Upper lobe of right lung (tissue), 1 donor: ENCODE measurements at regions of chr2 and their contacts with region 1.

Region 1: GRCh38 chr2:32969444-32970162 is 22.9 kb downstream of the LTBP1 start:
- DNase-seq: no peak
- ATAC-seq: no peak
- H3K4me3 ChIP-seq: no peak overlapping the region
- H3K27ac ChIP-seq: no peak overlapping the region
- H3K4me1 ChIP-seq: no peaks in the 10 kb centered on the region
- H3K27me3 ChIP-seq: no peaks in the 10 kb centered on the region
- CTCF ChIP-seq: no peak

Region 2: GRCh38 chr2:32715391-32715841 is 254.2 kb before region 1 on chr2:
- intact Hi-C with region 1: no loop called
- DNase-seq: no peak
- ATAC-seq: no peak
- H3K4me3 ChIP-seq: no peak overlapping the region
- H3K27ac ChIP-seq: no peak overlapping the region
- H3K4me1 ChIP-seq: peaks cover 17% of the 10 kb centered on the region
- H3K27me3 ChIP-seq: no peaks in the 10 kb centered on the region
- CTCF ChIP-seq: no peak

Region 3: DNA sequence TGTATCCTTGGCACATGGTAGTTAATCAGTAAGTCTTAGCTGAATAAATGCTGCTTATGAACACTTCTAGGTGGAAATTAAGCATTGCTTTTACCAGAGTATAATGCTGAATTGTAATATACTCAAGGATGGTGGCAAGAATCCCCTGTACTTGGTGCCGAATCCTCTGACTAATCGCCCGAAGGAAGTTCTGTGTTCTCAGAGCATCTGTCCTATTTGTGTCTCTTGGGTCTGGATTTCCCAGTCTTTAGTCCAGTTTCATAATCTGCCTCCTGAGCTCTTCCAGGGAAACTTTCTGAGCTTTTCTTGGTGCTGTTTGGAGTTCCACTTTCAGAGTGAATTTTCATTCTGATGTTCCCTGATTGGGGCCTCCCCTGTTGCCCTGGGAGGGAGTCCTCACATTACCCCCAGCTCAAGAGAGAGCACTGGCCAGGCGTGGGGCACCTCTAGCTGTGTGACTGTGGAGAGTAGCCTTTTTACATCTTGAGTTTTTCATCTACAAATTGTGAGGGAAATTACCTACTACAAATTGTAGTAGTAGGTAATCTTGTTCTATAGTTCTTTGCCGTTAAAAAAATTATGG is 122.0 kb after region 1 on chr2:
- intact Hi-C with region 1: loop called (anchors 5 kb)
- DNase-seq: no peak
- ATAC-seq: no peak
- H3K4me3 ChIP-seq: no peak overlapping the region
- H3K27ac ChIP-seq: no peak overlapping the region
- H3K4me1 ChIP-seq: peaks cover under 1% of the 10 kb centered on the region
- H3K27me3 ChIP-seq: no peaks in the 10 kb centered on the region
- CTCF ChIP-seq: no peak